Right cardiac atrium (tissue), 5 donors: ENCODE measurements at regions of chr10 and their contacts with region 1.

Region 1: GRCh38 chr10:52215745-52216361 is 98.2 kb upstream of the DKK1 start:
- DNase-seq: no peak
- ATAC-seq: peak in 1 of 2 donors; percentile 68
- H3K4me3 ChIP-seq: no peak overlapping the region
- H3K27ac ChIP-seq: no peak overlapping the region
- H3K4me1 ChIP-seq: no peaks in the 10 kb centered on the region
- H3K27me3 ChIP-seq: no peaks in the 10 kb centered on the region

Region 2: DNA sequence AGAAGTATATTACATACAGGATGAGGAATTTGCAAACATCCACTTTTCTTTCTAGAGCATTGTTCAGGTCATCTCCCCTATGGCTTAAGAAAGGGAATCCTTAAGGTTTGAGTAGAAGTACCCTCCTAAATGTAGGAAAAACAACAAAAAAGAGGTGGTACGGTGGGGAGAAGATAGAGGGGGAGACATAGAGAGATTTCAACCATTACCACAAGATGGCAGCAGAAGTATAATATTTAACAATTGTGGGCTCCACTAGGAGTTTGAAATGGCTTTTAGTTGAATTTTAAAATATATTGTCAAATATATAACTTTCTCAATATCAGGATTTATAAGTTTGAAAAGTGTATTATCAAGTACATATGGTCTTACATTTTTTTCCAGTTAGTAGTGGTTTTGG is 1214.3 kb before region 1 on chr10:
- intact Hi-C with region 1: loop called in 2 of 4 experiments (anchors 10 kb)
- DNase-seq: no peak
- ATAC-seq: peak; percentile 60 to 70
- H3K4me3 ChIP-seq: no peak overlapping the region
- H3K27ac ChIP-seq: no peak overlapping the region
- H3K4me1 ChIP-seq: peaks cover 1% of the 10 kb centered on the region
- H3K27me3 ChIP-seq: no peaks in the 10 kb centered on the region

Region 3: DNA sequence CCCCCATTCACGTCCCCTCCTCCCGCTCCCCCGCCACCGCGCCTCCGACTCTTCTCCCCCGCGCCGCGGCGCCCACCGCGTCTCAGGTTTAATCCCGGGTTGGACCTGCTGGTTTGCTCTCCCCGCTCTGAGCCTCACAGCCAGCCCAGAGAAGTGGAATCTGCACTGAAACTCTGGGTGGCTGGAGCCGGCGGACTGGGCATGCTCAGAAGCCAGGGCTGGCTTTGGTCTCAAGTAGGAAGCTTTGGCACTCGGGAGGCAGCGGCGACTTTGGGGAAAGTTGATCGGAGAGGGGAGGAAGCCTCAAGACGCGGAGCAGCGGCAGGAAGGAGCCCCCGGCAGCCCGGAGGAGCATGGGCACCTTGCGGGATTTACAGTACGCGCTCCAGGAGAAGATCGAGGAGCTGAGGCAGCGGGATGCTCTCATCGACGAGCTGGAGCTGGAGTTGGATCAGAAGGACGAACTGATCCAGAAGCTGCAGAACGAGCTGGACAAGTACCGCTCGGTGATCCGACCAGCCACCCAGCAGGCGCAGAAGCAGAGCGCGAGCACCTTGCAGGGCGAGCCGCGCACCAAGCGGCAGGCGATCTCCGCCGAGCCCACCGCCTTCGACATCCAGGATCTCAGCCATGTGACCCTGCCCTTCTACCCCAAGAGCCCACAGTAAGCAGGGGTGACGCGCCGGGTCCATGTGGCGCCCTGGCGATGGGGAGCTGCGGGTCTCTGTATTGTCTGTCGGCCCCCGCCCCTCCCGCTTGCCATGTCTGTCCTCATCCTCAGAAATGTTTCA is 1141.4 kb before region 1 on chr10 and contains the start of gene PRKG1:
- intact Hi-C with region 1: loop called in 1 of 4 experiments (anchors 10 kb)
- DNase-seq: peak; percentile 87 to 93 (median 89)
- ATAC-seq: peak; percentile 95 to 97
- H3K4me3 ChIP-seq: peak within 1 kb of the TSS; percentile 76
- H3K27ac ChIP-seq: peak within 1 kb of the TSS; percentile 6
- H3K4me1 ChIP-seq: peaks cover 1% of the 10 kb centered on the region
- H3K27me3 ChIP-seq: no peaks in the 10 kb centered on the region
- total RNA-seq, gene PRKG1: 45.5 to 49.9 (median 48.0) TPM